Dorsolateral prefrontal cortex (tissue), 120 donors: ENCODE measurements at regions of chr1 and their contacts with region 1.

Region 1: GRCh38 chr1:40531381-40532061 is at the start of gene ZNF684:
- DNase-seq: peak; percentile 75 to 94 (median 92)
- H3K4me3 ChIP-seq: peak within 1 kb of the TSS; percentile 66 to 98 (median 85)
- H3K27ac ChIP-seq: peak within 1 kb of the TSS; percentile 7 to 93 (median 75)
- H3K27me3 ChIP-seq: no peaks in the 10 kb centered on the region
- CTCF ChIP-seq: peak in 33 of 56 donors; percentile 2 to 58 (median 25)
- total RNA-seq, gene ZNF684: 3.1 to 15.7 (median 7.2) TPM

Region 2: GRCh38 chr1:40449684-40450494 is 81.6 kb before region 1 on chr1 and contains the start of gene ZFP69B:
- intact Hi-C with region 1: loop called in 1 of 2 experiments (anchors 5 kb)
- DNase-seq: peak; percentile 81 to 95 (median 89)
- H3K4me3 ChIP-seq: peak within 1 kb of the TSS; percentile 37 to 93 (median 79)
- H3K27ac ChIP-seq: peak within 1 kb of the TSS in 58 of 59 donors; percentile 28 to 95 (median 86)
- H3K27me3 ChIP-seq: no peaks in the 10 kb centered on the region
- CTCF ChIP-seq: peak in 45 of 56 donors; percentile 18 to 62 (median 36)
- total RNA-seq, gene ZFP69B: 5.1 to 18.3 (median 12.0) TPM

Region 3: GRCh38 chr1:40575336-40575735 is 43.8 kb after region 1 on chr1:
- intact Hi-C with region 1: no loop called
- DNase-seq: no peak
- H3K4me3 ChIP-seq: no peak overlapping the region
- H3K27ac ChIP-seq: no peak overlapping the region
- H3K27me3 ChIP-seq: no peaks in the 10 kb centered on the region
- CTCF ChIP-seq: no peak